Activated naive CD4-positive, alpha-beta T cell treated with anti-CD3 and anti-CD28 coated beads for 36 hours (primary cell): ENCODE measurements at regions of chr17 and their contacts with region 1.

Region 1: GRCh38 chr17:9924735-9925191 is 19.7 kb upstream of the RCVRN start:
- DNase-seq: peak; percentile 23
- H3K4me3 Mint-ChIP-seq: no peak overlapping the region
- H3K27ac Mint-ChIP-seq: no peak overlapping the region
- H3K4me1 Mint-ChIP-seq: peaks cover 2% of the 10 kb centered on the region
- H3K27me3 Mint-ChIP-seq: no peaks in the 10 kb centered on the region

Region 2: DNA sequence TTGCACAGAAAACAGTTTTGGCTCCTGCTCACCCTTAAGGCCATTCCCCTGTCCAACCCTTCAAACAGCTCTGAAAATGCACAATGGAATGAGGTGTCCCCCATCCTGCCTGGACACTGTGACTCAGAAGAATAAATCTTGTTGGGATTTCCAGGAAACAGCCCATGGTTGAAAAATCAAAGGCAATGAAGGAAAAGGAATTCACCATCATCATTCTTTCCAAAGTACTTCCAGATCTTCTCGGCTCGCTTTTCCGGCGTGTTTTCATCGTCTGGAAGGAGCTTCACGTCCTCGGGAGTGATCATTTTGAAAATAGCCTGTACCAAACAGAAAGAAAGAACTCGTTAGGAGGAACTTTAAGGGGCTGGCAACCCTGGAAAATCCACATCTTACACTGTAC is 24.0 kb before region 1 on chr17:
- CTCF ChIA-PET with region 1: no interaction called
- intact Hi-C with region 1: no loop called
- DNase-seq: no peak
- H3K4me3 Mint-ChIP-seq: no peak overlapping the region
- H3K27ac Mint-ChIP-seq: no peak overlapping the region
- H3K4me1 Mint-ChIP-seq: no peaks in the 10 kb centered on the region
- H3K27me3 Mint-ChIP-seq: peaks cover 8% of the 10 kb centered on the region

Region 3: GRCh38 chr17:9959377-9959981 is 34.7 kb after region 1 on chr17:
- CTCF ChIA-PET with region 1: interaction called, 3 read pairs
- intact Hi-C with region 1: loop called (anchors 2 kb)
- DNase-seq: peak; percentile 56
- H3K4me3 Mint-ChIP-seq: no peak overlapping the region
- H3K27ac Mint-ChIP-seq: no peak overlapping the region
- H3K4me1 Mint-ChIP-seq: no peaks in the 10 kb centered on the region
- H3K27me3 Mint-ChIP-seq: peaks cover 2% of the 10 kb centered on the region

Region 4: DNA sequence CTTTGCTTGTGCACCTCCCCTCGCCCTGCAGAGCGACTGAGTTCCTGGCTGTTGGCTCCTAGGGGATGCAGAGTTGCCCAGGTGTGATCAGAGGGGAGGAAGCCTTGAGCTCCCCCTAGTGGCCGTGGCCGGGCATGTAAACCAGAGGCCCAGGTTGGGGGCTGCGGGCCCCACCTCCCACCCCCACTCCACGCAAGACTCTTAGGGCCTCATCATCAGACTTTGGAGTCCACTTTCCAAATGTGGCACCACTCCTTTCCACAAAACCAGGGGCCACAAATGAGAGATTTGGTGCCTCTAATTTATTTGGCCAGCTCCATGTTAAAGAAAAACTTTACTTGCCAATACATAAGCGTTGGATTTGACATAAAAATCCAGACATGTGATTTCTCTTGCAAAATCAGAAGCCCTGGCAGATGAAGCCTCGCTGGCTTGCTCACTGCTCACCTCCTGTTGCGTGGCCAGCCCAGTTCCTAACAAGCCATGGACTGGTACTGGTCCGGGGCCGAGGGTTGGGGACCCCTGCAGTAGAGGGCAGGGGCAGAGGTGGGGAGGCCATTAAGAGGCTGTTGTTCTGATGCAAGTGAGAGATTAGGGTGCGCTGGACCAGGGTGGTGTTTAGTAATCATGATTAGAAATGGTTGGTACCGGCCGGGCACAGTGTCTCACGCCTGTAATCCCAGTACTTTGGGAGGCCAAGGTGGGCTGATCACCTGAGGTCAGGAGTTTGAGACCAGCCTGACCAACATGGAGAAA is 302.3 kb after region 1 on chr17:
- CTCF ChIA-PET with region 1: no interaction called
- intact Hi-C with region 1: loop called (anchors 1 kb)
- DNase-seq: peak; percentile 52
- H3K4me3 Mint-ChIP-seq: no peak overlapping the region
- H3K27ac Mint-ChIP-seq: no peak overlapping the region
- H3K4me1 Mint-ChIP-seq: no peaks in the 10 kb centered on the region
- H3K27me3 Mint-ChIP-seq: no peaks in the 10 kb centered on the region

Region 5: DNA sequence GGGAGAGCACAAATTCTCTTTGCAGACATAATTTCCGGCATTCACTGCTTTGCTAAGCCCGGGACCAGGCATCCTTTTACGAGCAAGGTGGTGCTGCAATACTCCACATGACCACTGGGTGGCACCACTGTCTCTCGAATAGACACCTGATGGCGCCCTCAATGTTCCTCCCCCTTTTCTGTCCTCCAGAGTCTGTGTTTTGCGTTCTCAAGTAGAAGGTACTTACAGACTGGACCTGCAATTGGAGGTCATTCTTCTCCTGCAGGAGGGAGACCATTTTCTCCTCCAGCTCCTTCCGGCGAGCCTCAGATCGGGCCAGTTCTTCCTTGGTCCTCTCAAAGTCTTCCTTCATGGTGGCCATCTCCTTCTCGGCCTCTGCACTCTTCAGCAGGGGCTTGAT is 402.9 kb after region 1 on chr17:
- CTCF ChIA-PET with region 1: no interaction called
- intact Hi-C with region 1: loop called (anchors 5 kb)
- DNase-seq: peak; percentile 83
- H3K4me3 Mint-ChIP-seq: no peak overlapping the region
- H3K27ac Mint-ChIP-seq: no peak overlapping the region
- H3K4me1 Mint-ChIP-seq: no peaks in the 10 kb centered on the region
- H3K27me3 Mint-ChIP-seq: peaks cover 3% of the 10 kb centered on the region